ENCODE measurements at regions of chr6 and their contacts with region 1.

Region 1: GRCh38 chr6:6820641-6821238 is 232.2 kb downstream of the LY86 start:
- DNase-seq: peak; percentile 98
- ATAC-seq: peak; percentile 84
- H3K4me3 ChIP-seq: peak overlapping the region in 1 of 2 experiments; percentile 7; a peak in 2 of 4 replicates
- H3K27ac ChIP-seq: peak overlapping the region; percentile 60
- H3K4me1 ChIP-seq: peaks cover 54 to 89% of the 10 kb centered on the region in 2 experiments
- H3K27me3 ChIP-seq: no peaks in the 10 kb centered on the region
- CTCF ChIP-seq: no peak
- POLR2A ChIP-seq: no peak
- RAD21 ChIP-seq: no peak

Region 2: DNA sequence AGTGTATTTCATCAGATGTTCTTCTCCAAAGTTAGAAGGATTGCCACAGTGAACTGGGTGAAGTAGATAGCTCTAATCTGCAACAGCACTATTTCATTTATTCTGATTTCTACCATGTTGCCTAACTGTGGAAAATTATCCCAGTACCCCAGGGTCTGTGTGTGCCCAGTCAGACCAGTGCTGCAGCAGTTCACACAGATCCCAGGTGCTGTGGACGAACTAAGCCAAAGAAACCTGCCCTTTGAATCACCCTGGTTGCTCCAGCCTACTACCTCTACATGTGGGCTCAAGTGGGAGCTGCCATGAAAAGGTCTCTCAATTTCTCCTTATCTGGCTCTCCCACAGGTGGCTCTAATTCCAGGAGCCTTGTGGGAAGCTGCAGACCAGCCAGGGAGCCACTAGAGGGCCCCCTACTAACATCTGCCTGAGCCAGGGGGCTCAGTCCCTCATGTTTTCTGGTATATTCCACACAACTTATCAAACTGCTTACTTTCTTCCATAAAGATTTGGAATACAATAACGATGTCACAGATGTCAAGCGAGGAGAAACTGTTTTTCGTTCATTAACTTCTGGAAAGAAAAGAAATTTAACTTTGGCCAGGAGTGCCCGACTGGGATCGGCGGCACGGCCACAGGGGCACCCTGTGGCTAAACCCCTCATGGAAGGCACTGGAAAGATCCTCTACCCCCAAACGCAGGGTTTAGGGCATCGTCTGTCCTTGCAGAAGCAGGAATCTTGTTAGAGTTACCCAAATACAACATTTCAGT is 263.8 kb before region 1 on chr6:
- CTCF ChIA-PET with region 1: no interaction called
- POLR2A ChIA-PET with region 1: no interaction called
- RAD21 ChIA-PET with region 1: no interaction called
- intact Hi-C with region 1: no loop called
- DNase-seq: peak; percentile 43
- ATAC-seq: peak; percentile 96
- H3K4me3 ChIP-seq: no peak overlapping the region
- H3K27ac ChIP-seq: no peak overlapping the region
- H3K4me1 ChIP-seq: no peaks in the 10 kb centered on the region
- H3K27me3 ChIP-seq: peaks cover 49% of the 10 kb centered on the region
- CTCF ChIP-seq: peak; percentile 71 to 97 (median 94)
- POLR2A ChIP-seq: no peak
- RAD21 ChIP-seq: peak; percentile 78

Region 3: GRCh38 chr6:6749702-6750491 is 70.8 kb before region 1 on chr6:
- CTCF ChIA-PET with region 1: no interaction called
- POLR2A ChIA-PET with region 1: no interaction called
- RAD21 ChIA-PET with region 1: no interaction called
- intact Hi-C with region 1: loop called (anchors 2 kb)
- DNase-seq: peak; percentile 56
- ATAC-seq: peak; percentile 80
- H3K4me3 ChIP-seq: peak overlapping the region; percentile 16 to 39; a peak in 3 of 4 replicates
- H3K27ac ChIP-seq: peak overlapping the region; percentile 58
- H3K4me1 ChIP-seq: peaks cover 35 to 57% of the 10 kb centered on the region in 2 experiments
- H3K27me3 ChIP-seq: no peaks in the 10 kb centered on the region
- CTCF ChIP-seq: no peak
- POLR2A ChIP-seq: no peak
- RAD21 ChIP-seq: peak; percentile 53

Region 4: DNA sequence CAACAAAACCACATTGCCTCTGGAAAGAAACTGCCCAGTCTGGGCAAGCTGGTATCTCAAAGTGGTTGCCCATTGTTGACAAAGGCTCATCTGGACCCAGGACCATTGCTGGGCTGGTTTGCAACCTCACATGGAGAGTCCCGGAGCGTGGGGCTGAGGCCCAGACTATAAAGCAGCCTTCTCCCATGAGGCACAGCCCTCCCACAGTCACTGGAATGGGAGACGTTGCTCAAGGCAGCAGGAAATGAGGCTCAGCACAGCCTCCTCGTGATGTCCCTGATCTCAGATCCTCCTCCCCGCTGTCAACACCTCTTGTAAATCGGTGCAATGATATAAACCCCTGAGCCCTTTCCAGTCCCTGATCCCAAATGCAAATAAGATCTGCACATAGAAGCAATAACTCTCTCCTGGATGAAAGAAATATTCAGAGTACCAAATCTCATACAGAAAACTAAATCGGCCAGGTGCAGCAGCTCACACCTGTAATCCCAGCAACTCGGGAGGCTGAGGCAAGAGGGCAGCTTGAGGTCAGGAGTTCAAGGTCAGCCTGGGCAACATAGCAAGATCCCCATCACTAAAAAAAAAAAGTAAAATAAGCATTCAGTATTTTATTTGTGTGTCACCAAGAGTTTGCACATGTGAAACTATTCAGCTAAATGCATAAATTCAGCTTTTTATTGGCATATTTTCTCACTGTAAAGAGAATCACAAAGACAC is 184.0 kb after region 1 on chr6:
- CTCF ChIA-PET with region 1: no interaction called
- POLR2A ChIA-PET with region 1: no interaction called
- RAD21 ChIA-PET with region 1: no interaction called
- intact Hi-C with region 1: no loop called
- DNase-seq: no peak
- ATAC-seq: no peak; the same call in 1 of the 2 replicates
- H3K4me3 ChIP-seq: no peak overlapping the region
- H3K27ac ChIP-seq: no peak overlapping the region
- H3K4me1 ChIP-seq: no peaks in the 10 kb centered on the region
- H3K27me3 ChIP-seq: no peaks in the 10 kb centered on the region
- CTCF ChIP-seq: no peak
- POLR2A ChIP-seq: no peak
- RAD21 ChIP-seq: no peak

Measured in HCT116 (cell line).